Mammary epithelial cell (primary cell): ENCODE measurements at regions of chr9 and their contacts with region 1.

Region 1: GRCh38 chr9:126704873-126705766 is 91.4 kb downstream of the LMX1B start:
- DNase-seq: peak; percentile 60
- H3K4me3 ChIP-seq: peak overlapping the region in 2 of 3 experiments; percentile 31 to 42
- H3K27ac ChIP-seq: no peak overlapping the region
- H3K4me1 ChIP-seq: peaks cover 20% of the 10 kb centered on the region
- H3K27me3 ChIP-seq: no peaks in the 10 kb centered on the region
- CTCF ChIP-seq: peak; percentile 89 to 93

Region 2: DNA sequence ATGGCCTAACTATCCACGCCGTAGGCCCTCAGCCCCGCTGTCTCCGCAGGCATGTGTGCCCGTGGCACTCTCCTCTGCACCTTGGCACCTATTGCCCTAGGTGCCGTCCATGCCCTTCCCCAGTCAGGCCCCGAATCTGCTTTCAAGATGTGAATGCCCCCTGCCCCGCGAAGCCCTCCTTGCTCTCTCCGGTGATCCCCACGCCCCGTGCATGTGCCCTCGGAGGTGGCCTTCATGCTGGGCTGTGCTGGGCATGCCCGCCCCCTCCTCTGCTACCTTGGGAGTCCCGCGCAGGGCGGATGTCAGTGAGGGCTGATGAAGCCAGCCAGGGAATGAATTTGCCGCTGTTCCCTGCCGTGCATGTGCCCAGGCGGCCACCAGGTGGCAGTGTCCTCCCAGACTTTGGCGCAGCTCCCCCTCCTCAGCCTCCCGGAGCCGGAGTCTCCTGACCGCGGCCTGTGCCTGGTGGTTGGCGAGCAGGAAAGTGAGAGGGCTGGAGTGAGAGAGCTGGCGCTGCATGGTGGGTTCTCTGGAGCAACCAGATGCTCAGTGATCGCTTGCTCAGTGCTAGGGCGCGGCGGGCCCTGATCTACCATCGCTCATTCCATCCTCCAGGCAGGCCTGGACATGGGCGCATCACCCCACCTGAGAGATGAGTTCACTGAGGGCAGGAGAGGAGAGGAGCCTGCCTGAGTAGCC is 204.3 kb before region 1 on chr9:
- CTCF ChIA-PET with region 1: no interaction called
- dilution Hi-C with region 1: no loop called
- in situ Hi-C with region 1: no loop called
- intact Hi-C with region 1: loop called (anchors 1 kb)
- DNase-seq: peak; percentile 62
- H3K4me3 ChIP-seq: no peak overlapping the region
- H3K27ac ChIP-seq: no peak overlapping the region
- H3K4me1 ChIP-seq: peaks cover 21% of the 10 kb centered on the region
- H3K27me3 ChIP-seq: no peaks in the 10 kb centered on the region
- CTCF ChIP-seq: peak; percentile 88 to 96

Region 3: DNA sequence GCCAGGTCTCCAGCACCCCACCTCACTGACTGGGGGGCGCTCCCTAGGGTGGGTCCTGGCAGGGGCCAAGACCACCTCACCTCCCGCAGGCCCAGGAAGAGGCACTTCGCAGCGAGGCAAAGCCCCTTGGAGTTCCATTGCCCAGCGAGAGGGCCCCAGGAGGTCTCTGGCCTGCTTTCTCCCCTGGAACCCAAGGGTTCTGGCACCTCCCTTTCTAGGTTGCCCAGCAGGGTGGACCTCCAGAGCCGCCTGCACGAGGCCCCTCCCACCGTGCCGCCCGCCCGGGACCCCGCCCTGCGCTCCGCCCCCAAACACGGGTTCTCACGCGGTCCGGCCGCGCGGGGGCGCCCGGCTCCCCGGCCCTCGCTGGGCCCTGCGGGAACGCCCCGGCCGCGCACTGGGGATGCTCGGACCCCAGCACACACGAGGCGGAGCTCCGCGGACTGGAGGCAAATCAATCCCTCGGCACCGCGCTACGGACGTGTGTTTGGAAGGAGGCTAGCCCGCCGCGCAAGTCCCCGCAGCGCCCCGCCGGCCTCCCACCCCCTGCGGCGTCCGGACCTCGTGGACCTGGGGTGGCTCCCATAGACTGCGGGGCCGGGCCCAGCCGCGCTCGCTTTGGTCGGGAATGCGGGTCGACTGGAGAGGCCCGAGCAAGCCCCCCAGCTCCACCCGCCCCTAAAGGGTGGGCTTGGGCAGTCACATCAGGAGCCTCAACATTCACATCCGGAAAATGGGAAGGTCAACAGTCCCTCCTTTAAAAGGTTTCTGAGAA is 190.9 kb before region 1 on chr9:
- CTCF ChIA-PET with region 1: no interaction called
- dilution Hi-C with region 1: no loop called
- in situ Hi-C with region 1: no loop called
- intact Hi-C with region 1: no loop called
- DNase-seq: peak; percentile 30
- H3K4me3 ChIP-seq: no peak overlapping the region
- H3K27ac ChIP-seq: peak overlapping the region; percentile 2
- H3K4me1 ChIP-seq: peaks cover 34% of the 10 kb centered on the region
- H3K27me3 ChIP-seq: no peaks in the 10 kb centered on the region
- CTCF ChIP-seq: peak; percentile 5 to 42

Region 4: GRCh38 chr9:126661521-126662220 is 43.4 kb before region 1 on chr9:
- CTCF ChIA-PET with region 1: interaction called, 4 read pairs
- dilution Hi-C with region 1: no loop called
- in situ Hi-C with region 1: no loop called
- intact Hi-C with region 1: loop called (anchors 1 kb)
- DNase-seq: peak; percentile 87
- H3K4me3 ChIP-seq: no peak overlapping the region
- H3K27ac ChIP-seq: peak overlapping the region; percentile 5
- H3K4me1 ChIP-seq: peaks cover 45% of the 10 kb centered on the region
- H3K27me3 ChIP-seq: no peaks in the 10 kb centered on the region
- CTCF ChIP-seq: peak; percentile 6 to 47

Region 5: DNA sequence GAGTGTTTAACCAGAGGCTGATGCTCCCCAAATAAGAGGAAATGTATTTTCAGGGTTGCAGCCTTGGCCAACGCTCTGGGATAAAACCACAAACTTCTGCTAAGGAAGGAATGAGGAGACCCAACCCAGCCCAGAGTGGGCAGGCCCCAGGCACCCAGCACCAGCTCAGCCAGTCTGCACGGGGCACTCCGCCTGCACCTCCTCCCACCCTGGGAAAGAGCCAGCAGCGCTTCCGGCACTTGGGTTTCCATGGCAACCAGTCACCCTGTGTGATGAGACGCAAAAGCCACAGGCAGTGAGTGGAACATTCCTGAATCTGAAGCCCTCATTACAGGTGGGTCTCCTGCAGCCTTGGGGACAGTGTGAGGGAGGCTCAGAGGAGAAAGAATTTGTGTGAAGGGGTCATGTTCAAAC is 14.5 kb after region 1 on chr9:
- CTCF ChIA-PET with region 1: interaction called, 3 read pairs
- dilution Hi-C with region 1: no loop called
- in situ Hi-C with region 1: no loop called
- intact Hi-C with region 1: loop called (anchors 2 kb)
- DNase-seq: peak; percentile 72
- H3K4me3 ChIP-seq: no peak overlapping the region
- H3K27ac ChIP-seq: peak overlapping the region; percentile 6
- H3K4me1 ChIP-seq: peaks cover 28% of the 10 kb centered on the region
- H3K27me3 ChIP-seq: no peaks in the 10 kb centered on the region
- CTCF ChIP-seq: no peak

Region 6: GRCh38 chr9:126752376-126752775 is 47.3 kb after region 1 on chr9:
- CTCF ChIA-PET with region 1: interaction called, 3 read pairs
- dilution Hi-C with region 1: no loop called
- in situ Hi-C with region 1: no loop called
- intact Hi-C with region 1: loop called (anchors 1 kb)
- DNase-seq: peak; percentile 31
- H3K4me3 ChIP-seq: no peak overlapping the region
- H3K27ac ChIP-seq: no peak overlapping the region
- H3K4me1 ChIP-seq: peaks cover 11% of the 10 kb centered on the region
- H3K27me3 ChIP-seq: peaks cover 2% of the 10 kb centered on the region
- CTCF ChIP-seq: no peak

Region 7: DNA sequence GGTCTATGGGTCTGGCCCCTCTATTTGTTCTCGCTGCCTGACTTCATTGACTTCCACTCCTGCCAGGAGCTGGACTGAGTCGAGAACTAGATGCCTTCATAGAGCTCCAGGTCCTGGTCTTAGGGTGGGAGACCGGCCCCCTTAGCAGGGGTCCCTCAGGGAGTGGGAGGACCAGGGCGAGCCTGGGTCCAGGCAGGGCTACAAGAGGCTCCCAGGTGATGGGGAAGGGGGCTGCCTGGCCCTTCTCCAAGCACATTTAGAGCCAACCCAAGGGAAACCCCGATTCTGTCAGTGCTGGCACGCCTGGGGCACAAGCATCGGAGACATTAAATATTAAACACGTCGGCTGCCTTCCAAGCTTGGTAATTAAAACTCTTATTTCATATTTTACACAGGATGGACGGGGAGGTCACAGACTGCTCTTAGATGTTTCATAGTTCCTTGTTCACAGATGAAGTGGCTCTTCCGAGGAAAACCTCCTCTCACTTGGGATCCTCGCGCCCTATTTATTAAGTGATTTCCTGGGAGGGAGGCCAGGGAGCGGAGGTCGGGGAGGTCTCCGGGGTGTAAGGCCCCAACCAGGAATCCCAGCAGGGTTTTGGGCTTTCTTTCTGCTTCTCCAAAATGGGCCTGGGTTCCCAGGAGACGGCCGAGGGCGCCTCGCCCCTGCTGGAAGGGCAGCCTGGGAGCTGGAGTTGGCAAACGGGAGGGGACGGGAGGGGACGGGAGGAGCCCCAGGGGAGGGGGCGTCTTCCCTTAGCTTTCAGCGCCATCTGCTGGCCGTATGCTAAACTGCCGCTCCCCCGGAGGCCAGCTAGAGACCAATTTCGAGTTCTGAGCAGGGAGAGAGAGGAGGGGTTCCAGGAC is 76.3 kb after region 1 on chr9:
- CTCF ChIA-PET with region 1: interaction called, 57 read pairs
- dilution Hi-C with region 1: loop called (anchors 5 kb)
- in situ Hi-C with region 1: loop called (anchors 5 kb)
- intact Hi-C with region 1: loop called (anchors 1 kb)
- DNase-seq: peak; percentile 65
- H3K4me3 ChIP-seq: peak overlapping the region in 1 of 3 experiments; percentile 23
- H3K27ac ChIP-seq: no peak overlapping the region
- H3K4me1 ChIP-seq: no peaks in the 10 kb centered on the region
- H3K27me3 ChIP-seq: no peaks in the 10 kb centered on the region
- CTCF ChIP-seq: peak; percentile 69 to 91

Region 8: DNA sequence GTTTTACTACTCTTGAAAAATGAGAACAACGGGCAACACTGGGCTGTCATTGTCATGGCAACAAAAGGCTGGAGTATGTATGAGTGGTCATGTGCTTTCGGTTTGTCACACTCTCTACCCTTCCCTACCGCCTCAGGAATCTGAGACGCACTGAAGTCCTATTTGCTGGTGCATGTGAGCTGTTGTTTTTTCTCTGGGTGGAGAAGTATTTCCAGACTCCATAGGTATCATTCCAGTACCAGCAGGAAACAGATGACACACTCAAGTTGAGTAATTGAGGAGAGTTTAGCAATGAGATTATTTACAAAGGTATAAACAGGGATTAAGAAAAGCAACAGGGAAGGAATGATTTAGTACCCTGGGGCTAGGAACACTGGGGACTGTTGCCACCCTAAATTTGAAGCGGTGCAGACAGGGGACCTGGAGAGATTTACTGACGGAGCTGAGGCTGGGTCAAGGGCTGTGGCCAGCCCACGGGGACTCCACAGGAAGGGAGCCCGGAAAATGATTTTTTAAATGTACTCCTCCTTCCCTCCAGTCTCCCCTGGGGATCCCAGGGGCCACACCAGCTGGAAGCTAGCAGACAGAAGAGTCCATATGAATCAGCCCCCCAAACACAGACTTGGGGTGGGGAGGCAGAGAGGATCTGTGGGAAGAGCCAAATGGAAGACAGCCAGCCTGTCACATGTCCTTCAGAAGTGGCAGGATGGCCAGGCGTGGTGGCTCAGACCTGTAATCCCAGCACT is 86.5 kb after region 1 on chr9:
- CTCF ChIA-PET with region 1: no interaction called
- dilution Hi-C with region 1: loop called (anchors 5 kb)
- in situ Hi-C with region 1: loop called in 1 of 2 experiments (anchors 5 kb)
- intact Hi-C with region 1: no loop called
- DNase-seq: peak; percentile 99
- H3K4me3 ChIP-seq: no peak overlapping the region
- H3K27ac ChIP-seq: peak overlapping the region; percentile 94
- H3K4me1 ChIP-seq: peaks cover 50% of the 10 kb centered on the region
- H3K27me3 ChIP-seq: no peaks in the 10 kb centered on the region
- CTCF ChIP-seq: no peak